Adrenal gland (tissue), 19 donors: ENCODE measurements at regions of chr19 and their contacts with region 1.

Region 1: GRCh38 chr19:17996826-17997316 is 11.1 kb upstream of the ARRDC2 start:
- DNase-seq: peak; percentile 77 to 94 (median 88)
- H3K4me3 ChIP-seq: no peak overlapping the region
- H3K27ac ChIP-seq: no peak overlapping the region
- H3K4me1 ChIP-seq: no peaks in the 10 kb centered on the region
- H3K27me3 ChIP-seq: no peaks in the 10 kb centered on the region
- CTCF ChIP-seq: peak; percentile 96 to 99 (median 99)
- POLR2A ChIP-seq: no peak

Region 2: GRCh38 chr19:17873786-17874757 is 122.8 kb before region 1 on chr19:
- intact Hi-C with region 1: loop called in 1 of 2 experiments (anchors 5 kb)
- DNase-seq: peak in 1 of 7 donors; percentile 32
- H3K4me3 ChIP-seq: no peak overlapping the region
- H3K27ac ChIP-seq: no peak overlapping the region
- H3K4me1 ChIP-seq: no peaks in the 10 kb centered on the region
- H3K27me3 ChIP-seq: peaks cover 47% of the 10 kb centered on the region
- CTCF ChIP-seq: no peak
- POLR2A ChIP-seq: no peak

Region 3: DNA sequence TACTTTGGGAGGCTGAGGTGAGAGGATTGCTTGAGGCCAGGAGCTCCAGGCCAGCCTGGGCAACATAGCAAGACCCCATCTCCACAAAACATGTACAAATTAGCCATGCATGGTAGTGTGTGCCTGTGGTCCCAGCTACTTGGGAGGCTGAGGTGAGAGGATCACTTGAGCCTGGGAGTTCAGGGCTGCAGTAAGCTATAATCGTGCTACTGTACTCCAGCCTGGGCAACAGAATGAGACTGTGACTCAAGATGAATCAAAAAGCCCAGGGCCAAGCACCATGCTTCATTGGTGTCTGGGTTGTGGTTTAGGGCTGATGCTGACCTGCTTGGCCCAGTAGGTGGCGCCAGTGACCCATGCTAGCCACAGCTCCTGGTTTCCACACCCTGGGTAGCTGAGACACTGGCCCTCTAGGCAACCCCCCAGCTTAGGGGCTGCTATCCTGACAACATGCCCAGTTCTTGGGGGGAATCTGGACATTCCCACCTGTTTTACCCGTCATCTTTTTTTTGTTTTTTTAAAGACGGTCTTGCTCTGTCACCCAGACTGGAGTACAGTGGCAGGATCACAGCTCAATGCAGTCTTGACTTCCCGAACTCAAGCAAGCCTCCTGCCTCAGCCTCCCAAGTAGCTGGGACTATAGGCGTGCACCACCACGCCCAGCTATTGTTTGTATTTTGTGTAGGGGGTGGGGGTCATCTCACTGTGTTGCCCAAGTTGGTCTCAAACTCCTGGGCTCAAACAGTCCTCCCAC is 58.6 kb before region 1 on chr19:
- intact Hi-C with region 1: loop called (anchors 2 kb)
- DNase-seq: peak; percentile 84 to 92 (median 87)
- H3K4me3 ChIP-seq: no peak overlapping the region
- H3K27ac ChIP-seq: no peak overlapping the region
- H3K4me1 ChIP-seq: peaks cover 5 to 10% of the 10 kb centered on the region in 2 donors
- H3K27me3 ChIP-seq: no peaks in the 10 kb centered on the region
- CTCF ChIP-seq: peak; percentile 90 to 97 (median 96)
- POLR2A ChIP-seq: no peak

Region 4: GRCh38 chr19:18428787-18429674 is 432.2 kb after region 1 on chr19:
- intact Hi-C with region 1: no loop called
- DNase-seq: peak; percentile 80 to 94 (median 85)
- H3K4me3 ChIP-seq: peak overlapping the region in 2 of 4 donors; percentile 16 to 25
- H3K27ac ChIP-seq: peak overlapping the region in 4 of 5 donors; percentile 40 to 81 (median 67)
- H3K4me1 ChIP-seq: peaks cover 24 to 49% of the 10 kb centered on the region in 2 donors
- H3K27me3 ChIP-seq: no peaks in the 10 kb centered on the region
- CTCF ChIP-seq: no peak
- POLR2A ChIP-seq: peak in 1 of 2 donors; percentile 44